ENCODE measurements at regions of chrX and their contacts with region 1.

Region 1: DNA sequence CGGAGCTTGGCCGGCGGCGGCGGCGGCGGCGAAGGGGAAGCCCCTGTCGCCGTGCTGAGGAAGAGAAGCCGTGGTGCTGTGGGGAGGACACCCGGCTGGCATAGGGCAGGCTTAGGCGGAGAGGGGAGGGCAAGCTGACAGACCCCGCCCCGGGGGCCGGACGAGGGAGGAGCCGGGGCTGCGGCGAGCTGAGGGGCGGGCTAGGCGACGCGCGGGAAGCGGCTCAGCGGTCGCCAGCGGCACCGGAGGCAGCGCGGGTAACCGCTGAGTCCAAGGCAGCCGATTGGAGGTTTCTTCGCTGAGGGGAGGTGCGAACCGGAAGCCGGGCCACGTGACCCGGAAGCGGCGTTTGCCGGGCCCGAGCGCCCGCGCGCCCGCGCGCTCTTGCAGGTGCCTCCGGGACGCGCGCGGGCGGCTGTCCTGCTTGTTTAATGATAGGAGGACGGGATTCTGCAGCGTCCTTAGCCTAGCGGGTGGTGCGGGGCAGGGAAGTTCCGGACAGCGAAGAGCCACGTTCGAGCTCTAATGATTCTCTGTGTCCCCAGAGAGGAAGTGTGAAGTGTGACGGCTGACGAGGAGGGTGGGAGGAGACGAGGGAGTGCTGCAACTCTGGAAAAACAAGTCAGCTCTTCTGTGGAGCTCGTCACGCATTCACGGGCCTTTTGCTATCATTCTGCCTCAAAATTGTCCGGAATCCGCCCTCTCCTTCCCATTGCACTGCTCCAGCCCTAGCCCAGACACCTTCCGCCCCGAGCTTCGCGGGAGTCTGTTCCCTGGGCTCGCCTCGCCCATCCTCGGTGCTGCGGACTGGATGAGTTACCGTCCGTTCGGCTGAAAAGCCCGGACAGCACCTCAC is at the start of gene AP1S2:
- DNase-seq: peak; percentile 80 to 97
- H3K4me3 ChIP-seq: peak within 1 kb of the TSS; percentile 84
- H3K27ac ChIP-seq: peak within 1 kb of the TSS; percentile 92 to 93
- H3K4me1 ChIP-seq: peaks cover 0 to 9% of the 10 kb centered on the region in 2 donors
- H3K27me3 ChIP-seq: no peaks in the 10 kb centered on the region
- CTCF ChIP-seq: no peak
- total RNA-seq, gene AP1S2: 99.3 TPM

Region 2: GRCh38 chrX:15335135-15336022 is 519.6 kb before region 1 on chrX and contains the start of gene PIGA:
- intact Hi-C with region 1: loop called (anchors 2 kb)
- DNase-seq: peak; percentile 88 to 98
- H3K4me3 ChIP-seq: peak within 1 kb of the TSS; percentile 64 to 73
- H3K27ac ChIP-seq: peak within 1 kb of the TSS; percentile 77 to 85
- H3K4me1 ChIP-seq: no peaks in the 10 kb centered on the region
- H3K27me3 ChIP-seq: no peaks in the 10 kb centered on the region
- CTCF ChIP-seq: no peak
- total RNA-seq, gene PIGA: 54.6 TPM

Region 3: GRCh38 chrX:15493118-15493962 is 361.6 kb before region 1 on chrX and contains the start of gene PIR:
- intact Hi-C with region 1: loop called (anchors 5 kb)
- DNase-seq: peak; percentile 57 to 93
- H3K4me3 ChIP-seq: peak within 1 kb of the TSS; percentile 49 to 70
- H3K27ac ChIP-seq: peak within 1 kb of the TSS; percentile 44 to 56
- H3K4me1 ChIP-seq: no peaks in the 10 kb centered on the region
- H3K27me3 ChIP-seq: no peaks in the 10 kb centered on the region
- CTCF ChIP-seq: peak in 2 of 3 experiments; percentile 36 to 56
- total RNA-seq, gene PIR: 14.6 TPM

Region 4: DNA sequence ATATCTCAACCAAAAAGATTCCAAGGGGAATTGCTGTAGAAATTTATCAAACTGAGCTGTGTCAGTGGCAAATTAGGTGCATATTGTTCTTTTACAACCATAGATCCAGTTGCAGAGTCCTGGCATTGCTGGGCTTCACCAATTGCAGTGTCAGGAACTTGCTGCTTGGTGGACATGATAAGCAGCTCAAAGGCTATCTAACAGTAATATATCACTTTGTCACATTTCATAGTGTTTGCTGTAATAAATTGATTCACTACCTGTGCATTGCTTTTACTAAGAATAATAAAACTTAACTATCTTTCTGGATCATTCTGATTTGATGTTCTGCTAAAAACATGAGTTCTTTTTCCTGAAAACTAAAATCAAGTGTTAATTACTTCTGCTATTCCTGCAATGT is 223.3 kb before region 1 on chrX:
- intact Hi-C with region 1: no loop called
- DNase-seq: no peak
- H3K4me3 ChIP-seq: no peak overlapping the region
- H3K27ac ChIP-seq: no peak overlapping the region
- H3K4me1 ChIP-seq: no peaks in the 10 kb centered on the region
- H3K27me3 ChIP-seq: no peaks in the 10 kb centered on the region
- CTCF ChIP-seq: no peak

Region 5: GRCh38 chrX:15737960-15738902 is 116.7 kb before region 1 on chrX and contains the start of gene CA5B:
- intact Hi-C with region 1: loop called (anchors 1 kb)
- DNase-seq: peak; percentile 85 to 98
- H3K4me3 ChIP-seq: peak within 1 kb of the TSS; percentile 59 to 80
- H3K27ac ChIP-seq: peak within 1 kb of the TSS; percentile 66 to 75
- H3K4me1 ChIP-seq: peaks cover 0 to 3% of the 10 kb centered on the region in 2 donors
- H3K27me3 ChIP-seq: no peaks in the 10 kb centered on the region
- CTCF ChIP-seq: no peak
- total RNA-seq, gene CA5B: 13.5 TPM

Region 6: DNA sequence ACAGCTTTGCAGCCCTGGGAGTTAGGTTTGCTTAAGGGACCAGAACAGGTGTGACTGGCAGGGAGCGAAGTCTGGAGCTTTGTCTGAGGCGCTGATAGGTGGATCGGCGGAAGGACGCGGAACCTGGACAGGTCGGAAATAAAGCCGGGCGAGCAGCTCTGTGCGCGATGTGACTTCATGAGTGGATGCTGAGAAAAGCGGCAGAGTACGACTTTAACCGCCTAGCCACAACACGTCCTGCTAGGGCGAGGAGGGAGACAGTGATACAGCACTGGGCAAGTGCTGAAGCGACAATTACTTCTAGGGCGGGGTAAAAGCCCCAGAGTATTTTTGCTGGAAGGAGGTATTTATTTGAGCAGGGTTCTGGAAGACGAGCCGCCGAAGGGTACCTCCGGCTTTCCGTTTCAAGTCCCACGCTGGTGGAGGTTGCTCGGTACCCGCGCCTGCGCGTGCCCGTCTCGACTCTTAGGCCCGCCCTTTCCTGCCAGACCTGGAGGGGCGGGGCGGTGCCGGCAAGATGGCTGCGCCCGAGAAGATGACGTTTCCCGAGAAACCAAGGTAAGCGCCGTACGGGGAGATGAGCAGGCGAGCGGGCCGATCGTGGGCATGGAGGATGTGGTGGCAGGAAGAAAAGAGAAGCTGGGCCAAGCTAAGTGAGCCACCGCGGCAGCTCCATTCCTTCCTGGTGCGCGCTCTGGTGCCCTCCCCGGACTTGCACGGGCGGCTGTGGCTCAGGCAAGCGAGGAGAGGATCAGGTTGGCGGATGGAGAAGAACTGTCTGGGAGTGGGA is 64.8 kb before region 1 on chrX and contains the start of gene ZRSR2:
- intact Hi-C with region 1: loop called (anchors 1 kb)
- DNase-seq: peak; percentile 41 to 94
- H3K4me3 ChIP-seq: peak within 1 kb of the TSS; percentile 80 to 90
- H3K27ac ChIP-seq: peak within 1 kb of the TSS; percentile 85
- H3K4me1 ChIP-seq: peaks cover 4 to 12% of the 10 kb centered on the region in 2 donors
- H3K27me3 ChIP-seq: no peaks in the 10 kb centered on the region
- CTCF ChIP-seq: no peak
- total RNA-seq, gene ZRSR2: 0.64 TPM

Region 7: DNA sequence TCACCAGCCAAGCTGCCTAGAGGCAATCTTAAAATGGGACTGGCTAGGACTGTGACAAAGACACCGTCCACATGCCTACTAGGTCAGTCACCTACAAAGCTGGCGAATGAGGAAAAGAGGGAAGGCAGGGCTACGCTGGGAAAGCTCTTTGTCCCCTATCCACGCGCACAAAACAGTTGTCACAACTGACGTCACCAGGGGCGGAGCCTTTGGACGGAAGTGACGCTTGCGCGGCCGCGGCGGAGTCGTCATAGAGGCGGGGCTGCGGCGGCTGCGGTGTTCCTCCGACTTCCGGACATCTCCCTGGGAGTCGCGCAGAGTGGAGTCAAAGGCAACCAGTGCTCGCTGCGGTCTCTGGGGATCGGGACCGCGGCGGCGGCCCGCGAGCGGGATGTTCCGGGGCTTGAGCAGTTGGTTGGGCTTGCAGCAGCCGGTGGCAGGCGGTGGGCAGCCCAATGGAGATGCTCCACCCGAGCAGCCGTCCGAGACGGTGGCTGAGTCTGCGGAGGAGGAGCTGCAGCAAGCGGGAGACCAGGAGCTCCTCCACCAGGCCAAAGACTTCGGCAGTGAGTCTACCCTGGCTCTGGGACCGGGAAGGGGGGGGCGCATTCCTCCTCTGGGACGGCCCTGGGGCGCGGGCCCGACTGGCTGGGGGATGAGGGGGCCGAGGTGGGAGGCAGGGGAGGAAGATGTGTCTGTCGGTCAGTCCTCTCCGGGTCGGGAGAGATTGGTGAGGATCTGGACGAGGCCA is 864.6 kb after region 1 on chrX and contains the start of gene SYAP1:
- intact Hi-C with region 1: loop called (anchors 1 kb)
- DNase-seq: peak; percentile 94 to 99
- H3K4me3 ChIP-seq: peak within 1 kb of the TSS; percentile 86 to 93
- H3K27ac ChIP-seq: peak within 1 kb of the TSS; percentile 93 to 98
- H3K4me1 ChIP-seq: peaks cover 0 to 16% of the 10 kb centered on the region in 2 donors
- H3K27me3 ChIP-seq: no peaks in the 10 kb centered on the region
- CTCF ChIP-seq: no peak
- total RNA-seq, gene SYAP1: 14.2 TPM

Region 8: GRCh38 chrX:16786139-16786790 is 931.3 kb after region 1 on chrX and contains the start of gene TXLNG:
- intact Hi-C with region 1: loop called (anchors 5 kb)
- DNase-seq: peak; percentile 99 to 100
- H3K4me3 ChIP-seq: peak within 1 kb of the TSS; percentile 87 to 89
- H3K27ac ChIP-seq: peak within 1 kb of the TSS; percentile 88 to 90
- H3K4me1 ChIP-seq: peaks cover 0 to 11% of the 10 kb centered on the region in 2 donors
- H3K27me3 ChIP-seq: no peaks in the 10 kb centered on the region
- CTCF ChIP-seq: no peak
- total RNA-seq, gene TXLNG: 3.9 TPM

Measured in ascending aorta (tissue), 2 donors.